Activated naive CD4-positive, alpha-beta T cell treated with anti-CD3 and anti-CD28 coated beads for 36 hours (primary cell): ENCODE measurements at regions of chr3 and their contacts with region 1.

Region 1: GRCh38 chr3:18872466-18872865 is 275.8 kb upstream of the KCNH8 start:
- DNase-seq: no peak
- H3K4me3 Mint-ChIP-seq: no peak overlapping the region
- H3K27ac Mint-ChIP-seq: no peak overlapping the region
- H3K4me1 Mint-ChIP-seq: peaks cover 51% of the 10 kb centered on the region
- H3K27me3 Mint-ChIP-seq: no peaks in the 10 kb centered on the region

Region 2: DNA sequence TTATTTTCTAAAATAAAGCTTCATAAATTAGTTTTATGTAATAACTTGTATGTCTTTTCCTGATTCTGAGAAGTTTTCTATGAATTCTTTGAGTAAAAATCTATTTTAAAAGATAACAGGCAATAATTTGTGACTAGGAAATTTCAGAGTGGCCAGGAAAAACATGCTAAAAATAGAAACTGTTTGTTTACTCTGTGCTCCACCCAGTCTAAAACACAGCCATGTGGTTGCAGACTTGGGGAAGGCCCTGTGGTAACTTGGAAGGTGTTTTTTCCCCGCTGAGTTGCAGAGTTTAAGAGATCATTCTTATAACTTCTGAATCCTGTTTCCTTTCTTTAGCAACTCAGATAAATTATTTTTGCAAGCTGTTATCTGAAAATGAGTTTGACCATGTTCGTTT is 1965.8 kb before region 1 on chr3:
- CTCF ChIA-PET with region 1: no interaction called
- intact Hi-C with region 1: loop called (anchors 10 kb)
- DNase-seq: peak; percentile 43
- H3K4me3 Mint-ChIP-seq: no peak overlapping the region
- H3K27ac Mint-ChIP-seq: no peak overlapping the region
- H3K4me1 Mint-ChIP-seq: peaks cover 78% of the 10 kb centered on the region
- H3K27me3 Mint-ChIP-seq: no peaks in the 10 kb centered on the region

Region 3: GRCh38 chr3:18424729-18425640 is 447.5 kb before region 1 on chr3 and contains the start of gene SATB1:
- CTCF ChIA-PET with region 1: no interaction called
- intact Hi-C with region 1: loop called (anchors 5 kb)
- DNase-seq: peak; percentile 84
- H3K4me3 Mint-ChIP-seq: peak within 1 kb of the TSS; percentile 86
- H3K27ac Mint-ChIP-seq: peak within 1 kb of the TSS; percentile 98
- H3K4me1 Mint-ChIP-seq: peaks cover 73% of the 10 kb centered on the region
- H3K27me3 Mint-ChIP-seq: no peaks in the 10 kb centered on the region
- total RNA-seq, gene SATB1: 303 to 305 TPM

Region 4: DNA sequence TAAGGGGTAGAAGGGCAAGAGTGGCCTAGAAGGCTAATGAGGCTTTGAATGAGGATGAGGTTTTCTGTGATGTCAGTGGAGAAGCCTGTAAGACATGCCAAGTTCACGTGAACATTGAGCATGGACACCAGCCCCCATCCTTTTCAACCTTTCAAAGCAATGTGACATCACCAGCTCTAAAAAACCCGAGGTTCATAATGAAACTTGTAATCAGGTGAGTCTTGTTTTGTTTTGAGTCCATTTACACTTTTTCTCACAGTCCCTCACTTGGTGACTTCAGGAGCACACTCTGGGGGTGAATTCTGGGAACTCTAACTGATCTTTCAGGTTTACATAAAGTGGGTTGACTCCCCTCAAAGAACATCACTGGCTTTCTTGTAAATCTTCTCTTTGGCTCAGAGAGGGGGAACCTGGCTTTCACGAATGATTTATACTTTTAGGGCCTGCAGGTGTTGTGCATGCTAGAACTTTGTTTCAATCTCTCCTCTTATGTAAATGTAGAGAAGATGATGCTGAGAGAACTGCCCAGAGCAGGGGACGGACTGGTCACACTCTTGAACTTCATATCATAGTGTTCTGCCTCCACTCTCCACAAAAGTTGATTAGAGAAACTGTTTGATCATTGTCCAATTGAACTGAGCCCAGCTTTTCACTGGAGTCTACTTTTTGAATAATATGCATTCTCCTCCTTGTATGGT is 222.7 kb before region 1 on chr3:
- CTCF ChIA-PET with region 1: no interaction called
- intact Hi-C with region 1: loop called (anchors 2 kb)
- DNase-seq: peak; percentile 87
- H3K4me3 Mint-ChIP-seq: no peak overlapping the region
- H3K27ac Mint-ChIP-seq: peak overlapping the region; percentile 92
- H3K4me1 Mint-ChIP-seq: peaks cover 74% of the 10 kb centered on the region
- H3K27me3 Mint-ChIP-seq: no peaks in the 10 kb centered on the region

Region 5: DNA sequence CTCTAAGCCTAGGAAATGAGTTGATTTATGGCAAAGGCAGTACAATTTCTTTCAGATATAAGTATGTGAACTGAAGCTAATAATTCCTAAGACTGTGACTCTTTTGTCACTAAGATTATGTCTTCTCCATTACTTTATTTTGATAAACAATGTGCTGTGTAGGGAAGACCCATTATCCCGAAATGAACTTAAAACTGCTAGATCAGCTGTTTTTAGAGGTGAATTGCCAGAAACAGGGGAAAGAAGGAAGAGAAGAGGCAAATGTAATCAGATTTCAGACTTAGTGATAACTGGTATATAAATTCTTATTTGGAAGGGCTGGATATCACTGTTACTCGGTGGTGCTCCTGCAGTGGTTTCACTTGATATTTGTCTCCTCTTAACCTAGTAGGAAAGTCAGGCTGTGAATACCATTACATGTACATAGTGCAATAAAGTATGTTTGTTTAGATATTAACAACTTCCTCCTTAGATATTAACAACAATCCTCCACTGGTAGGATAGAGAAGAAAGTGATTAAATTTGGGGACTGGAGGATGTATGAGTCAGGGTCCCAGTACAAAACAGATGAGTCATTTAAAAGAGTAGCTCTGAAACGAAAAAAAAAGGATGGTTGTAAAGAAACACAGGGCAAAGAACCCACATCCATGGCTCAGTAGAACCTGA is 62.7 kb before region 1 on chr3:
- CTCF ChIA-PET with region 1: no interaction called
- intact Hi-C with region 1: loop called (anchors 1 kb)
- DNase-seq: no peak
- H3K4me3 Mint-ChIP-seq: no peak overlapping the region
- H3K27ac Mint-ChIP-seq: peak overlapping the region; percentile 71
- H3K4me1 Mint-ChIP-seq: peaks cover 33% of the 10 kb centered on the region
- H3K27me3 Mint-ChIP-seq: no peaks in the 10 kb centered on the region

Region 6: GRCh38 chr3:19146685-19147650 is 274.5 kb after region 1 on chr3:
- CTCF ChIA-PET with region 1: no interaction called
- intact Hi-C with region 1: loop called (anchors 1 kb)
- DNase-seq: peak; percentile 78
- H3K4me3 Mint-ChIP-seq: peak overlapping the region; percentile 81
- H3K27ac Mint-ChIP-seq: peak overlapping the region; percentile 54
- H3K4me1 Mint-ChIP-seq: peaks cover 15% of the 10 kb centered on the region
- H3K27me3 Mint-ChIP-seq: peaks cover 34% of the 10 kb centered on the region